Activated CD4-positive, alpha-beta memory T cell treated with anti-CD3 and anti-CD28 coated beads for 36 hours (primary cell): ENCODE measurements at regions of chr5 and their contacts with region 1.

Region 1: DNA sequence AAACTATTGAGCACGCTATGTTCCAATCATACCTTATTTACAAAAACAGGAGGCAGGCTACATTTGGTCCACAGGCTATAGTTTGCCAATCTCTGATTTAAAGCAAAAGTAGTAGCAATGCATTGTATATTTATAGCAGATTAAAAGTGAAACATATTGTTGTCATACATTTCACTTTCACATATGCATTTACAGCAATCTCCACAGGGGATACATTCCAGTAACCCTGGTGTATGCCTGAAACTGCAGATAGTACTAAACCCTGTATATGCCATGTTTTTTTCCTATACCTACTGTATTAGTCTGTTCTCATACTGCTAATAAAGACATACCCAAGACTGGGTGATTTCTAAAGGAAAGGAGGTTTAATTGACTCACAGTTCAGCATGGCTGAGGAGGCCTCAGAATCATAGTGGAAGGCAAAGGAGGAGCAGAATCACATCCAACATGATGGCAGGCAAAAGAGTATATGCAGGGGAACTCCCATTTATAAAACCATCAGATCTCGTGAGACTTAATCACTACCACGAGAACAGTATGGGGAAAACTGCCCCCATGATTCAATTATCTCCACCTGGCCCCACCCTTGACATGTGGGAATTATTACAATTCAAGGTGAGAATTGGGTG is 5.9 kb upstream of the CSF1R start:
- DNase-seq: peak; percentile 18
- H3K4me3 Mint-ChIP-seq: no peak overlapping the region
- H3K27ac Mint-ChIP-seq: peak overlapping the region; percentile 28
- H3K4me1 Mint-ChIP-seq: peaks cover 9% of the 10 kb centered on the region
- H3K27me3 Mint-ChIP-seq: peaks cover 16% of the 10 kb centered on the region

Region 2: DNA sequence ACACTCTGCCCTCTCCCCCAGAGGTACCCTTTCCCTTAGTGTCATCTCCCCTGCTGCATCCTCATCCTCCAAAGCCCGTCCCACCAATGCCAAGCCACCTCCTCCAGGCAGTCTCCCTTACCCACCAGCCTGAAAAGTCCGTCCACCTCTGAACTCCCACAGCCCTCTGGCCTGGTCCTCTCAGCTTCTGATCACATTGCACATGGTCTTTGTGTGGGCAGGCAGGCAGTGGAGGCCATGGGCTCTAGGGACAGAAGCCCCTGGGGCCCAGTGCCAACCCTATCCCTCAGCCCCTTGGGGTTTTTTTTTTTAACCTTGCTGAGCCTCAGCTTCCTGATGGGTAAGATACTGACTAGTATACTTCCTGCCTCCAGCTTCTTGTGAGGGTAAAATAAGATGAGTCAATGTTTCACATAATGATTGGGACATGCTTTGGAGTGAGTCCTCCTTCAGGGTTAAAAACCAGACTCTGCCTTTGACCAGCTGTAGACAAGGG is 25.3 kb before region 1 on chr5:
- CTCF ChIA-PET with region 1: no interaction called
- POLR2A ChIA-PET with region 1: no interaction called
- intact Hi-C with region 1: loop called (anchors 1 kb)
- DNase-seq: peak; percentile 26
- H3K4me3 Mint-ChIP-seq: no peak overlapping the region
- H3K27ac Mint-ChIP-seq: peak overlapping the region; percentile 38
- H3K4me1 Mint-ChIP-seq: peaks cover 12% of the 10 kb centered on the region
- H3K27me3 Mint-ChIP-seq: peaks cover 2% of the 10 kb centered on the region

Region 3: GRCh38 chr5:150106674-150107426 is 14.6 kb after region 1 on chr5:
- CTCF ChIA-PET with region 1: no interaction called
- POLR2A ChIA-PET with region 1: no interaction called
- intact Hi-C with region 1: no loop called
- DNase-seq: no peak
- H3K4me3 Mint-ChIP-seq: no peak overlapping the region
- H3K27ac Mint-ChIP-seq: no peak overlapping the region
- H3K4me1 Mint-ChIP-seq: no peaks in the 10 kb centered on the region
- H3K27me3 Mint-ChIP-seq: peaks cover 2% of the 10 kb centered on the region